Ascending aorta (tissue), 2 donors: ENCODE measurements at regions of chr16 and their contacts with region 1.

Region 1: DNA sequence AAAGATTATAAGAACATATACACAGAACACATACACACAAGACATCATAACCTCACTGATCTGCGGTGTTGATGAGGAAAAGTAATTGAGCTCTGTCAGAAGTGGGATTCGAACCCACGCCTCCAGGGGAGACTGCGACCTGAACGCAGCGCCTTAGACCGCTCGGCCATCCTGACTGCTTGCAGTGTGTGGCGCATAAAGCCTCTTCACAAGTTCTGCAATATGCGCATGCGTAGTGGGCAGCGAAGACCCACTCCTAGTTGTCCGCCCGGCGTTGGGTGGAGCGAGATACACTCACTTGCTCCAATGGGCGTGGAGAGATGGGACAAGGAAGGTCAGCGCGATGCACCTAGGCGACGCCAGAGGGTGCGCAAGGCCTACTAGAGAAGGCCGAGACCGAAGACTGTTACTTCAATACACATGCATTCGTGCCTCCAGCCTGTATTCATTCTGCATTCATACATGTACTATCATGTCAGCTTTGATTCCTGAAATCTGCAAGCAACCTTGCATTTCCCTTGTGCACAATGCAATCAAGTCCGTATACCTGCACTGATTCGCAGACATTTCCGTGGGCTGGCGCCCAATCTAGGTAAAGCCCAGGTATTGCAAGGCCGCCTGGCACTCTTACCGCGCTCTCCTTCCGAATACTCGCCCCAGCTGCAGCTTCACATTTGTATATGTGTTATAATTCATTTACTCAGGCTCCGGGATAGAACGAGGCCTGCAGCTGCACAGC is 16.1 kb upstream of the PLLP start:
- DNase-seq: peak; percentile 99 to 100
- H3K4me3 ChIP-seq: peak overlapping the region; percentile 50 to 66
- H3K27ac ChIP-seq: peak overlapping the region; percentile 94 to 95
- H3K4me1 ChIP-seq: peaks cover 7 to 15% of the 10 kb centered on the region in 2 donors
- H3K27me3 ChIP-seq: no peaks in the 10 kb centered on the region
- CTCF ChIP-seq: peak; percentile 93 to 99 (median 93)

Region 2: DNA sequence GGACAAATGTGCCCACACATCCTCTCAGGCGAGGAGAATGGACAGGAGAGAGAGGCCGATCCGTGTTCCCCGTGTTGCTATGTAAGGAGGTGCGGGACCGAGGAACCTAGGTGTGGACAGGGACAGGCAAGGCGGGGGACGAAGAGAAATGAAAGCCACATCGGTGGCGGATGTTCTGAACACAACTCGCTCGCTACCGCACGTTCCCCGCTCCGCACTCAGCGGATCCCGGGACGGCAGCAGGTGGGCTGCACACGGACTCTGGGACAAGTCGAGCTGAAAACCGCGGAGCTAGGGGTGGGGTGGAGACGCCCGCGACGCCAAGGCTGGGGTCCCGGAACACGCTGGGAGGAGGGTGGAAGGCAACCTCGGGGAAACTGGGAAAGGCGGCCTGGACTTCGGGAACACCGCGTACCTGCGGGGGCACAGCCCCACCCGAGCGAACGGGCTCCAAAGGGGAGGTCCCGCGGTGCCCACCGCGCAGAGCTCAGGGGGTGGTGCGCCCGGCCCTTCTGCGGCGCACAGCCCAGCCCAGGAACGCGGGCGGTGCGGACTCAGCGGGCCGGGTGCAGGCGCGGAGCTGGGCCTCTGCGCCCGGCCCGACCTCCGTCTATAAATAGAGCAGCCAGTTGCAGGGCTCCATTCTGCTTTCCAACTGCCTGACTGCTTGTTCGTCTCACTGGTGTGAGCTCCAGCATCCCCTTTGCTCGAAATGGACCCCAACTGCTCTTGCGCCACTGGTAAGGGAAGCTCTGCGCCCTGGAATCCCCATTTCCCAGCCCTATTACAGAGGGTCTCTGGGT is 675.2 kb before region 1 on chr16 and contains the start of gene MT1E:
- intact Hi-C with region 1: loop called (anchors 5 kb)
- DNase-seq: peak in 1 of 2 donors; percentile 93
- H3K4me3 ChIP-seq: peak within 1 kb of the TSS; percentile 71 to 82
- H3K27ac ChIP-seq: peak within 1 kb of the TSS; percentile 96
- H3K4me1 ChIP-seq: peaks cover 3 to 4% of the 10 kb centered on the region in 2 donors
- H3K27me3 ChIP-seq: no peaks in the 10 kb centered on the region
- CTCF ChIP-seq: no peak
- total RNA-seq, gene MT1E: 456 TPM

Region 3: GRCh38 chr16:57091975-57092785 is 208.4 kb before region 1 on chr16 and contains the start of gene CPNE2:
- intact Hi-C with region 1: loop called (anchors 5 kb)
- DNase-seq: peak in 1 of 2 donors; percentile 78
- H3K4me3 ChIP-seq: peak within 1 kb of the TSS; percentile 89 to 90
- H3K27ac ChIP-seq: peak within 1 kb of the TSS; percentile 83 to 85
- H3K4me1 ChIP-seq: peaks cover 12 to 19% of the 10 kb centered on the region in 2 donors
- H3K27me3 ChIP-seq: no peaks in the 10 kb centered on the region
- CTCF ChIP-seq: no peak
- total RNA-seq, gene CPNE2: 36.6 TPM

Region 4: GRCh38 chr16:57244767-57245471 is 55.6 kb before region 1 on chr16 and contains the start of gene ARL2BP:
- intact Hi-C with region 1: loop called (anchors 1 kb)
- DNase-seq: peak; percentile 97 to 99
- H3K4me3 ChIP-seq: peak within 1 kb of the TSS; percentile 79 to 81
- H3K27ac ChIP-seq: peak within 1 kb of the TSS; percentile 92 to 96
- H3K4me1 ChIP-seq: peaks cover 2 to 12% of the 10 kb centered on the region in 2 donors
- H3K27me3 ChIP-seq: no peaks in the 10 kb centered on the region
- CTCF ChIP-seq: no peak
- total RNA-seq, gene ARL2BP: 44.1 TPM

Region 5: DNA sequence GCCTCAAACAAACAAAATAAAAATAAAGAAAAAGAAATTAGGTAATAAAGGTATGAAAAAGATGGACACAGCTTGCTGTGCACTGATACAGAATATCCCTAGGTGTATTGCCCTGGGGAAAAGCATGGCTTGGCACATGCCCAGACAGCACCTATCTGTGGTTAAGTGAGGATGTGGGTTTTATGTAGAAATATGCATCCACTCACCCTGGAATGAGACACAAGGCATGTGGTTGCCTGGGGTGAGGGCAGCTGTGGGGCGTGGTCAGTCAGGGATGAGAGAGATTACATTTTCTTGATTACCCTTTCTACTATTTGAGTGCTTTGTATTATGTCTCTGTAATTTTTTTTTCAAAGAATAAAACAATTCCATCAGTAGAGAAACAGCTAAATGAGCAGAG is 23.0 kb before region 1 on chr16:
- intact Hi-C with region 1: no loop called
- DNase-seq: no peak
- H3K4me3 ChIP-seq: no peak overlapping the region
- H3K27ac ChIP-seq: no peak overlapping the region
- H3K4me1 ChIP-seq: no peaks in the 10 kb centered on the region
- H3K27me3 ChIP-seq: no peaks in the 10 kb centered on the region
- CTCF ChIP-seq: no peak

Region 6: GRCh38 chr16:57372372-57373116 is 72.0 kb after region 1 on chr16 and contains the start of gene CX3CL1:
- intact Hi-C with region 1: loop called (anchors 1 kb)
- DNase-seq: peak in 1 of 2 donors; percentile 95
- H3K4me3 ChIP-seq: peak within 1 kb of the TSS; percentile 75 to 76
- H3K27ac ChIP-seq: peak within 1 kb of the TSS; percentile 94 to 99
- H3K4me1 ChIP-seq: peaks cover 16 to 37% of the 10 kb centered on the region in 2 donors
- H3K27me3 ChIP-seq: no peaks in the 10 kb centered on the region
- CTCF ChIP-seq: peak; percentile 20 to 56 (median 48)
- total RNA-seq, gene CX3CL1: 251 TPM

Region 7: GRCh38 chr16:57535680-57536305 is 235.2 kb after region 1 on chr16:
- intact Hi-C with region 1: loop called (anchors 2 kb)
- DNase-seq: peak; percentile 74 to 97
- H3K4me3 ChIP-seq: peak overlapping the region; percentile 92 to 93
- H3K27ac ChIP-seq: peak overlapping the region; percentile 89 to 90
- H3K4me1 ChIP-seq: peaks cover 19 to 24% of the 10 kb centered on the region in 2 donors
- H3K27me3 ChIP-seq: no peaks in the 10 kb centered on the region
- CTCF ChIP-seq: peak in 2 of 3 experiments; percentile 21 to 27